ENCODE measurements at regions of chr9 and their contacts with region 1.

Region 1: GRCh38 chr9:122904823-122905710 is at the start of gene RC3H2:
- DNase-seq: peak; percentile 86
- ATAC-seq: peak; percentile 89
- H3K4me3 Mint-ChIP-seq: peak within 1 kb of the TSS; percentile 92
- H3K27ac Mint-ChIP-seq: peak within 1 kb of the TSS; percentile 94
- H3K4me1 Mint-ChIP-seq: peaks cover 34% of the 10 kb centered on the region
- H3K27me3 Mint-ChIP-seq: no peaks in the 10 kb centered on the region
- CTCF ChIP-seq: no peak
- total RNA-seq, gene RC3H2: 50.8 and 62.7 TPM in 2 replicates

Region 2: DNA sequence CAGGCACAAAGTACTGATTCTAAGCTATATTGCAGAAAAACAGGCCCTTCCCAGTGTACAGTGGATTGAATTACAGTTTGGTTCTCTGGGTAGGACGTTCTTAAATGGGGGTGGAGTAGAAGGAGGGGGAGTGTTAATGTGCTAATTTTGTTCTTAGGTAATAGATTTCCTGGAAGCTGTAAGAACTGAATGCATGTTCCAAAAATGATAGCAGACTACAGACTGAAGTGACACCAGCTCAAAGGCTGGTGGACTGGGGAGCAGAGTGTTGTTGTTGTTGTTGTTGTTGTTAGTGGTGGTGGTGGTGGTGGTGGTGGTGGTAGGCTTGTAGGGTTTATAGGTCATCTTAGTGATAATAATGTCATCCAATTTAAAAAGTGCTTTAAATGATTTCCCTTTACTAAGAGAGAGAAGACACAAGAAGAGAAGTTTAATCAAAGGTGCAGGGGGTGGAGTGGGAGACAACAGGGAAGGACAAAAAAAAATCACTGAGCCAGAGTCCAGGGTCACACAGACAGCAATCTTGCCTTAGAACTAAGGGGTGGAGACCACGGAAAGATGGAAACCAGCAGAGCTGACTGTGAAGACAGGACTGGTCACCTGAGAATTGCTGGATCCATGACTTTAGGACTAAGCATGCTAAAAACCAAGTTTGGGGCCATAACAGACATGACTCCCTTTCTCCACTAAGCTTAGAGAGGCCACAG is 839.0 kb before region 1 on chr9:
- CTCF ChIA-PET with region 1: no interaction called
- POLR2A ChIA-PET with region 1: interaction called, 15 read pairs
- intact Hi-C with region 1: no loop called
- DNase-seq: no peak
- ATAC-seq: no peak
- H3K4me3 Mint-ChIP-seq: no peak overlapping the region
- H3K27ac Mint-ChIP-seq: no peak overlapping the region
- H3K4me1 Mint-ChIP-seq: no peaks in the 10 kb centered on the region
- H3K27me3 Mint-ChIP-seq: no peaks in the 10 kb centered on the region
- CTCF ChIP-seq: no peak

Region 3: GRCh38 chr9:122827761-122828093 is 77.3 kb before region 1 on chr9:
- CTCF ChIA-PET with region 1: no interaction called
- POLR2A ChIA-PET with region 1: interaction called, 14 read pairs
- intact Hi-C with region 1: loop called (anchors 2 kb)
- DNase-seq: no peak
- ATAC-seq: peak; percentile 0
- H3K4me3 Mint-ChIP-seq: peak overlapping the region; percentile 88
- H3K27ac Mint-ChIP-seq: peak overlapping the region; percentile 91
- H3K4me1 Mint-ChIP-seq: peaks cover 13% of the 10 kb centered on the region
- H3K27me3 Mint-ChIP-seq: no peaks in the 10 kb centered on the region
- CTCF ChIP-seq: no peak

Region 4: DNA sequence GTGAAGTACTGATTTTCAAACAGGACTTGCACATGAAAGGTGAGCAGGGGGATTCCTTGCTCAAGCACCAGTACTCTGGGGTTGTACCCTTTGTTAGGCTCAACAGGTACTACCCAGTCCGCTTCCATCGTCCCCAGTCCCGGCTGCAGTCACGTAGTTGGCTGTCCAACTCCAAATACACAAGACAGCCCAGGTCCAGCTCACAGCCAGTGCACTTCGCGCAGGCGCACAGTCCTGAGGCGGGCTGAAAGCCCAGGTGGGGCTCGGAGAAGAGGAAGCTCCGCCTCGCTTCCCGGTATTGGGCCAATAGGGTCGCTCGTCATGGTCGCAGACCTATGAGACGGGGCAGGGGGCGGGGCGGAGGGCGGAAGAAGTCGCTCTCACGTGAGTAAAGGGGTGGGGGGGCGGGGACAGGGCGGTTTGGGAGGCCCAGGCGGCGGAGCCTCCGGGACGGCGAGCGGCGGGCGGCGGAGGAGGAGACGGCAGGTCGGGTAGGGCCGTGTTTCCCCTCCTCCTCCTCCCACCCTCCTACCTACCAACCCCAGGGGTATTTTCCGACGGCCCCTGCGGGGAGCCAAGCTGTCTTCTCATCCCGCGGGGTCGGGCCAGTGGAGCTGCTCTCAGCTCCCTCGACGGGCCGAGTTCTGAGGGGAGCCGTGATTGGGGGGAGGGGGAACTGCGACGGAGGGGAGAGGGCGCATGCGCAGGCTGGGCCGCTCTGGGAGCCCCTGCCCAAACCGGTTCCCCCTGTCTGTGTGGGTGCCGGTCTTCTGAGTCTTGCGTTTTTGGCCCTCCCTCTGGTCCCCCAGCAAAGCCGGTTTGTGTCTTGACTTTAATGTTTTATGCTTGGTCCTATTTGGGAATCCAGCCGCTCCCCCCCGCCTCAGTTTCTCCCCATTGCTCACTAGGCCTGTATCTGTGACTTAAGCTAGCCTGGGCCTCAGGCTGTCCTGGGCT is 35.8 kb after region 1 on chr9 and contains the start of gene RABGAP1:
- CTCF ChIA-PET with region 1: no interaction called
- POLR2A ChIA-PET with region 1: interaction called, 39 read pairs
- intact Hi-C with region 1: loop called (anchors 1 kb)
- DNase-seq: peak; percentile 89
- ATAC-seq: peak; percentile 98
- H3K4me3 Mint-ChIP-seq: peak within 1 kb of the TSS; percentile 93
- H3K27ac Mint-ChIP-seq: peak within 1 kb of the TSS; percentile 79
- H3K4me1 Mint-ChIP-seq: peaks cover 27% of the 10 kb centered on the region
- H3K27me3 Mint-ChIP-seq: no peaks in the 10 kb centered on the region
- CTCF ChIP-seq: no peak
- total RNA-seq, gene RABGAP1: 47.4 and 58.1 TPM in 2 replicates

Region 5: DNA sequence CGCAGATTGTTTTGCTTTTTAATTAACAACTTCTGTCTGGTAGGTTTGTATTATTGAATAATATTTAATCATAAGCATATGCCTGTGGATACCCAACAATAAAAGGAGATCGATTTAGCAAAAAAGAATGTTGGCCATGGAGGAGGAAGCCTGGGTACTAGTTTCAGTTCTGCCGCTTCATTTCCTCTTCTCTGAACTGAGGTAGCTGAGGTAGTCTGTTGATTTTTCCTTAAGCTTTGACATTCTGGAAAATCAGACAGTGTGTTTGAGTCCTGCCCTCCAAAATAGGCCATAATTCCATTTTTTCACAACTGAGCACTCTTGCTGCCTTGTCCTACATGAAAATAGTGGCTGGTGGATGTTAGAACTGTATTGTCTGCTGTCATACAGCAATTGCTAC is 122.5 kb after region 1 on chr9:
- CTCF ChIA-PET with region 1: no interaction called
- POLR2A ChIA-PET with region 1: no interaction called
- intact Hi-C with region 1: no loop called
- DNase-seq: no peak
- ATAC-seq: no peak
- H3K4me3 Mint-ChIP-seq: no peak overlapping the region
- H3K27ac Mint-ChIP-seq: no peak overlapping the region
- H3K4me1 Mint-ChIP-seq: peaks cover 20% of the 10 kb centered on the region
- H3K27me3 Mint-ChIP-seq: no peaks in the 10 kb centered on the region
- CTCF ChIP-seq: no peak

Region 6: GRCh38 chr9:123225374-123225813 is 320.3 kb after region 1 on chr9:
- CTCF ChIA-PET with region 1: no interaction called
- POLR2A ChIA-PET with region 1: no interaction called
- intact Hi-C with region 1: loop called (anchors 10 kb)
- DNase-seq: no peak
- ATAC-seq: peak; percentile 92
- H3K4me3 Mint-ChIP-seq: peak overlapping the region; percentile 45
- H3K27ac Mint-ChIP-seq: peak overlapping the region; percentile 84
- H3K4me1 Mint-ChIP-seq: peaks cover 55% of the 10 kb centered on the region
- H3K27me3 Mint-ChIP-seq: no peaks in the 10 kb centered on the region
- CTCF ChIP-seq: no peak